ENCODE measurements at regions of chr12 and their contacts with region 1.

Region 1: GRCh38 chr12:32178341-32179010 is 71.8 kb downstream of the BICD1 start:
- DNase-seq: no peak
- H3K4me3 ChIP-seq: no peak overlapping the region
- H3K27ac ChIP-seq: no peak overlapping the region
- H3K4me1 ChIP-seq: no peaks in the 10 kb centered on the region
- H3K27me3 ChIP-seq: no peaks in the 10 kb centered on the region
- CTCF ChIP-seq: no peak

Region 2: DNA sequence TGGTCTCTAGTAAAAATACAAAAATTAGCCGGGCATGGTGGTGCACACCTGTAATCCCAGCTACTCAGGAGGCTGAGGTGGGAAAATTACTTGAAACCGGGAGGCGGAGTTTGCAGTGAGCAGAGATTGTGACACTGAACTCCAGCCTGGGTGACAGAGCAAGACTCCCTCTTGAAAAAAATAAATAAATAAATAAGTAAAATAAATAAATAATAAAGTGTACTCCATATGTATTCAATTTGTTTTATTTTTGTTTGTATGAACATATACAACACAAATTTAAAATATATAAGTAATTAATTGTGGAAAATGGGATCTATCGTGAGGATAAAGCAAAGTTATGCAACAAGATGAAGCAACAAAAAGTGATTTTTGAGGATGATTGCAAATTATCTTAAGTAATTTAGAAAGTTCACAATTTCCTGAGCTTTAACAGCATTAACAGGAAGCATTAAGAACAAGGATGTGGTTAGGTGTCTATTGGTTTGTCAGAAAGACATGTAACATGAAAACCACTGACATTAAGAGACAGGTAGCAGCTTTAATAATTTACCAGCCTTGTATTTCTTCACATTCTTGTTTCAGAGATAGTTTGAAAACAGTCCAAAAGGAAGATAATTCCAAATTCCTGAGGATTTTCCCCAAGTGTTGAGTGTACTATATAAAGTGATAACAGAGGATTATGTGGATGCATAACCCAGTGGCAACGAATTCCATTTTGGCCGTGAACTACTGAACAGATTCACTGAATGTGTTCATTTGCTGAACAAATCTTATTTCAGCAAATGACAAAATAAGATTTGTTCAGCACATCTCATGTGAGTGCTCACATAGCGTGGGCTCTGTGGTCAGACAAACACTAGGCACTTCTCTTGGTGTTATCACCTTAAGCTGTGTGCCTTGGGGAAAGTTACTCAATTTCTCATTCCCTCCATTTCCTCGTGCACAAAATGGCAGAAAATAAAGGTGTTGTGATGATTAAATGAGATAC is 287.9 kb before region 1 on chr12:
- CTCF ChIA-PET with region 1: no interaction called
- dilution Hi-C with region 1: no loop called
- in situ Hi-C with region 1: no loop called
- intact Hi-C with region 1: no loop called
- DNase-seq: no peak
- H3K4me3 ChIP-seq: no peak overlapping the region
- H3K27ac ChIP-seq: no peak overlapping the region
- H3K4me1 ChIP-seq: no peaks in the 10 kb centered on the region
- H3K27me3 ChIP-seq: no peaks in the 10 kb centered on the region
- CTCF ChIP-seq: no peak

Region 3: GRCh38 chr12:32252199-32253073 is 74.0 kb after region 1 on chr12:
- CTCF ChIA-PET with region 1: no interaction called
- dilution Hi-C with region 1: loop called (anchors 5 kb)
- in situ Hi-C with region 1: no loop called
- intact Hi-C with region 1: no loop called
- DNase-seq: no peak
- H3K4me3 ChIP-seq: no peak overlapping the region
- H3K27ac ChIP-seq: no peak overlapping the region
- H3K4me1 ChIP-seq: peaks cover 24% of the 10 kb centered on the region
- H3K27me3 ChIP-seq: no peaks in the 10 kb centered on the region
- CTCF ChIP-seq: no peak

Measured in mammary epithelial cell (primary cell).